Vagina (tissue), 2 donors: ENCODE measurements at regions of chr3 and their contacts with region 1.

Region 1: DNA sequence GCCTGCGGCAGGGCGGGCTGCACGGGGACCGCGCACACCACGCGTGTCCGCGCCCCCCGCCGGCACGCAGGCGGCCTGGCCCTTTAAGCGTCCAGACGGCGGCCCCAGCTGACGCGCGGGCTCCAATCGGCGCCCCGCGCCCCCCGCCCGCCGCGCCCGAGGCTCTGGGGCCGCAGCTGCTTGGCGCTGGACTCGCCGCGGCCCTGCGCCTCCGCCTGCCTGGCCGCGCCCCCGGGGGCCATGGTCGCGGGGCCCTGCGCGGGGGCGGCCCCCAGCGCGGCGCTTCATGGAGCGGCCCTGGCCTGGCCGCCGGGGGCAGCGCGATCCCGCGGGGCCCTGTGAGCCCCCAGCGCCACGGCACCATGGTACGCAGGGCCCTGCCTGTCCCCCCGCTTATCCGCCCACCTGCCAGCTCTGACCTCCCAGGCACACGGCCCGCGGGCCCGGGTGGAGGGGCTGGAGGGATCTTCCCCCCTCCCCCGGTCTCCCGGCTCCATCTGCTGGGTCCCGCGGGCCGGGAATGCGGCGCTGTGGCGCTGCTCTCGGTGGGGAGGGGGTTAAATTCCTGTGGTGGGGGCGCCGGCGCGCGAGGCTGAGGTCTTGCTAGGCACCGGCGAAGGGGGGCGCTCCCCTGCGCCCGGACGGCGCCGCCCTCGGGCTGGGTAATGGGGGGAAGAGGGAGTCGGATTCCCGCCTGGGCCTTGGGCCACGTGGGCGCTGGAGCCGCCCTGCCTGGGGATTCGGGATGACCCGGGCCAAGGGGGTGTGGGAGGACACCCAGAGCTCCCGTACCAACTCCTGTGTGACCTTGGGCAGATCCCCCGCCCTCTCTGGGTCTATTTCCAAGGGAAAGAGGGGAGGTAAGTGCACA is 1.1 kb downstream of the ZBTB47 start:
- DNase-seq: peak in 1 of 2 donors; percentile 87
- H3K4me3 ChIP-seq: peak overlapping the region; percentile 71 to 98
- H3K27ac ChIP-seq: peak overlapping the region; percentile 96
- H3K4me1 ChIP-seq: peaks cover 71% of the 10 kb centered on the region
- H3K27me3 ChIP-seq: no peaks in the 10 kb centered on the region
- CTCF ChIP-seq: no peak
- POLR2A ChIP-seq: peak in 1 of 2 donors; percentile 53

Region 2: GRCh38 chr3:42572278-42572677 is 82.3 kb before region 1 on chr3:
- intact Hi-C with region 1: no loop called
- DNase-seq: no peak
- H3K4me3 ChIP-seq: no peak overlapping the region
- H3K27ac ChIP-seq: no peak overlapping the region
- H3K4me1 ChIP-seq: no peaks in the 10 kb centered on the region
- H3K27me3 ChIP-seq: no peaks in the 10 kb centered on the region
- CTCF ChIP-seq: no peak
- POLR2A ChIP-seq: no peak

Region 3: DNA sequence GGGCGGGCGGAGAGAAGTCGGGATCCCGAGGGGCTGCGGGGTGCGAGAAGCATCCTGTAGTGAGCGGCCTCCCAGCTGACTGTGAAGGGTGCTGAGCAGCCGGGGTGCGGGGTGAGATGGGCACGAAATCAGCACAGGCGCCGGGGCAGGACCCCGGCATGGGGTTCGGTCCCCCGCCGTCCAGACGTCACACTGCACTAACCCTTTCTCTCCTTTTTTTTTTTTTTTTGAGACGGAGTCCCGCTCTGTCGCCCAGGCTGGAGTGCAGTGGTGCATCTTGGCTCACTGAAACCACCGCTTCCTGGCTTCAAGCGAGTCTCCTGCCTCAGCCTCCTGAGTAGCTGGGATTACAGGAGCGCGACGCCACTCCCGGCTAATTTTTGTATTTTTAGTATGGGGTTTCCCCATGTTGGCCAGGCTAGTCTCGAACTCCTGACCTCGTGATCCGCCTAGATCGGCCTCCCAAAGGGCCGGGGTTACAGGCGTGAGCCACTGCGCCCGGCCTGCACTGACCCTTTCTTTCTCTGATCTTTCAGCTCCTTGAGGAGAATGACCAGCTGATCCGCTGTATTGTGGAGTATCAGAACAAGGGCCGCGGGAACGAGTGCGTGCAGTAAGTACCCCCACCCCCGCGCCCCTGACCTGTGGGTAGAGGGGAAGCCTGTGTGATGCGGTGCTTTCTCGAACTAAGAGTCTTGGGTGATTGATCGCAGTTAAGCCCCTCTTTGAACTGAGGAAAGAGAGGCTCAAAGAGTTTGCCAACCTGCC is 63.4 kb before region 1 on chr3:
- intact Hi-C with region 1: loop called (anchors 2 kb)
- DNase-seq: no peak
- H3K4me3 ChIP-seq: peak overlapping the region; percentile 66 to 73
- H3K27ac ChIP-seq: peak overlapping the region; percentile 88
- H3K4me1 ChIP-seq: peaks cover 22% of the 10 kb centered on the region
- H3K27me3 ChIP-seq: no peaks in the 10 kb centered on the region
- CTCF ChIP-seq: no peak
- POLR2A ChIP-seq: no peak

Region 4: DNA sequence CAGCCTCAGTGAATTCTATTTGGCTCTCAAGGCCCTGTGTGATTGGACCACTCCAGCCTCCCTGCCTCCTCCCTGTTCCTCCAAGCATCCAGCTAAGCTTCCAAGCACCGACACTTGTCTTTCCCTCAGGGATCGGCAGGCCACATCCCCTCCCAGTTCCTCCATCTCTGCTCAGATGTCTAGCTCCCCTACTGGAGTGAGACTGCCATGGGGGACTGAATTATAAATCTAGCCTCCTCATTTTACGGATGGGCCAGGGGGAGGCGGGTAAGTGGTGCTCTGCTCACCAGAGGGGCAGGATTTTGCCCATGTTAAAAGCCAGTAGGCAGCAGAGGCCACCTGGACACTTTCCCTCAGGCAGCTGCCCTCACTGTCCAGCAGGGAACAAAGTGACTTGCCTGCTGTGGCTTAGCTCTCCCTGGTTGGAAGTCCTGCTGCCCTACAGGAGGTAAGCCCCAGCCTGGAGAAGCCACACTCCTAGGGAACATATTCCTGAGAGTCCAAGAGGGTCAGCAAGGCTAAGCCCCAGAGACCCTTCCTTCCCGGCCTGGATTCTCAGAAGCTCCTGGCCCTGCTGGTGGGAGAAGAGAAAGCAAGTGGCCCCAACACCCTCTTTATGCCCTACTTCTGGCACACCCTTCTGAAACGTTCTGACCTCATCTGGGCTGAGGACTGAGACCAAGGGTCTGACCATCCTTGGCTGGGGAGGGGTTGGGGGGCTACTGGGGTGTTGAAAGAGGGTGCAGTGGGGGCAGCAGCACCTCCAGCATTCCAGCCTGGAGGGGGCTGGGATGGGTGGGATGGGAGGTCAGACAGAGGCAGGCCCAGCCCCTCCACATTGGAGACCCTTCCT is 57.2 kb after region 1 on chr3:
- intact Hi-C with region 1: no loop called
- DNase-seq: peak in 1 of 2 donors; percentile 46
- H3K4me3 ChIP-seq: no peak overlapping the region
- H3K27ac ChIP-seq: no peak overlapping the region
- H3K4me1 ChIP-seq: no peaks in the 10 kb centered on the region
- H3K27me3 ChIP-seq: no peaks in the 10 kb centered on the region
- CTCF ChIP-seq: no peak
- POLR2A ChIP-seq: no peak